ENCODE measurements at regions of chr13 and their contacts with region 1.

Region 1: GRCh38 chr13:45433381-45433790 is 15.2 kb upstream of the SLC25A30 start:
- DNase-seq: no peak
- H3K4me3 ChIP-seq: no peak overlapping the region
- H3K27ac ChIP-seq: no peak overlapping the region
- H3K4me1 ChIP-seq: no peaks in the 10 kb centered on the region
- H3K27me3 ChIP-seq: no peaks in the 10 kb centered on the region

Region 2: DNA sequence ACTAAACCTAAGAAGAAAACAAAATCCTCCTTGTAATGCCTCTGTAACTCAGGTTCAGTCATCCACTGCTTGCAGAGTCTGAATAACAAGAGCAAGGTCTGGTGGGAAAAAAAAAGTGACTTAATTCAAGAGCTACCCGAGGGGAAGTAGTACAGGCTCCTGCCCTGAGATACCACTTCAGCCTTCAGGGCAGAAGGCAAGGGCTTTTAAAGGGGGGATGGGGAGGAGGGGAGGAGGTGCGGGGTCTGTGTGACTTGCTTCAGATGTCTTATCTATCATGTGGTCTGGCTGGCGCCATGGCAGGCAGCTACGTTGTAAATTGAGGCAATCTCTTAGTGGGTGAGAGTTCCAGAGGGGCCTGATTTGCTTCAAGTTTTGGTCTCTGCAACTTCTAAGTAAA is 845.1 kb after region 1 on chr13:
- CTCF ChIA-PET with region 1: no interaction called
- POLR2A ChIA-PET with region 1: interaction called, 13 read pairs
- DNase-seq: peak; percentile 8 to 63 (median 51)
- H3K4me3 ChIP-seq: no peak overlapping the region
- H3K27ac ChIP-seq: no peak overlapping the region
- H3K4me1 ChIP-seq: peaks cover 0 to 4% (median 0%) of the 10 kb centered on the region in 4 experiments
- H3K27me3 ChIP-seq: no peaks in the 10 kb centered on the region